ENCODE measurements at regions of chr22 and their contacts with region 1.

Region 1: DNA sequence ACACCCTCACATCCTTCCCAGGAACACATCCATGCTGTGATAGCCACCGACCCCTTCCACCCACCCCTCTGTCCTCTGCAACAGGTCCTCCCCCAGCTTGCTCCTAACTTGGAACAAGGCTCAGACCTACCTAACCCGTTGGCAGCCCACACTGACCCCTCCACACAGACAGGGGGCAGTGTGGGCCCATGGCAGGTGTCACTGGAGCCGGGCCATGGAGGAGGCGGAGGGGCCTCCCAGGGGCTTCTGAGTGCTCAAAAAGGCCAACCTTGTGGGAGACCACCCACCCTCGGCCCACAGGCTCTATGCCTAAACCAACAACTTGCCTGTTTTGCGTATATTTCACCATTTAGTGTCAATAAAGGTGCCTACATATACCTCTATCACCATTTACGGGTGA is 57.0 kb downstream of the CERK start:
- DNase-seq: no peak
- ATAC-seq: no peak
- H3K4me3 ChIP-seq: no peak overlapping the region
- H3K27ac ChIP-seq: no peak overlapping the region
- H3K4me1 ChIP-seq: peaks cover 9 to 70% (median 47%) of the 10 kb centered on the region in 9 donors
- H3K27me3 ChIP-seq: no peaks in the 10 kb centered on the region
- CTCF ChIP-seq: peak in 7 of 9 donors; percentile 17 to 45 (median 24)

Region 2: DNA sequence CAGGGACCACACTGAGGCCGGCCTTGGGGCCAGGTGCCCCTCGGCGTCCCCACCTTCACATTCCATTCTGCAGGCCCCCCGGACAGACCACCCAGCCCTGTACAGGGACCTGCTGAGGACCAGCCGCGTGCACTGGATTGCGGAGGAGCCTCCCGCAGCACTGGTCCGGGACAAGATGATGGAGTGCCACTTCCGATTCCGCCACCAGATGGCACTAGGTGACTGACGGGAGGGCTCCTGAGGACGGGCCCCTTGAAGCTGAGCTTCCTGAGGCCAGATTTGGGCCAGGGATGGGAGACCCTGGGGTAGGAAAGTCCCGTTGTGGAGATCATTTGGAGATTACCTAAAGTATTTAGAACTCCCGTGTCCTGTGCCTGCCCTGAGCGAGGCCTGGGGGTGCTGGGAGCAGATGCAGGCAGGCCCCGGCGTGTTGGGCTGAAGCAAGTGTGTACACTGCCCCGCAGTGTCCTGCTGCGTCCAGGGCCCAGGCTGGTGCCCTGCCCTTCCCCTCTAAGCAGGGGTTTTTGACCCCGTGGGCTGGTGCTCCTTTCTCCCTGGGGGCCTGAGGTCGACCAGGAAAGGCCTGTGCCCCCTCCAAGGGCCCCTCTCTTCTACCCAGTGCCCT is 325.5 kb before region 1 on chr22:
- intact Hi-C with region 1: loop called in 1 of 10 experiments (anchors 10 kb)
- DNase-seq: peak; percentile 57 to 70
- ATAC-seq: peak in 7 of 8 donors; percentile 18 to 57 (median 38)
- H3K4me3 ChIP-seq: no peak overlapping the region
- H3K27ac ChIP-seq: peak overlapping the region in 3 of 10 donors; percentile 23 to 44 (median 44)
- H3K4me1 ChIP-seq: peaks cover 3 to 41% (median 15%) of the 10 kb centered on the region in 9 donors
- H3K27me3 ChIP-seq: no peaks in the 10 kb centered on the region
- CTCF ChIP-seq: peak; percentile 38 to 82 (median 79)

Region 3: GRCh38 chr22:46542011-46542985 is 138.7 kb before region 1 on chr22:
- intact Hi-C with region 1: no loop called
- DNase-seq: peak; percentile 62 to 79
- ATAC-seq: peak; percentile 66 to 83 (median 76)
- H3K4me3 ChIP-seq: no peak overlapping the region
- H3K27ac ChIP-seq: peak overlapping the region in 1 of 10 donors; percentile 15
- H3K4me1 ChIP-seq: peaks cover 0 to 46% (median 31%) of the 10 kb centered on the region in 9 donors
- H3K27me3 ChIP-seq: peaks cover 0 to 48% (median 30%) of the 10 kb centered on the region in 7 donors
- CTCF ChIP-seq: peak; percentile 86 to 97 (median 90)

Region 4: DNA sequence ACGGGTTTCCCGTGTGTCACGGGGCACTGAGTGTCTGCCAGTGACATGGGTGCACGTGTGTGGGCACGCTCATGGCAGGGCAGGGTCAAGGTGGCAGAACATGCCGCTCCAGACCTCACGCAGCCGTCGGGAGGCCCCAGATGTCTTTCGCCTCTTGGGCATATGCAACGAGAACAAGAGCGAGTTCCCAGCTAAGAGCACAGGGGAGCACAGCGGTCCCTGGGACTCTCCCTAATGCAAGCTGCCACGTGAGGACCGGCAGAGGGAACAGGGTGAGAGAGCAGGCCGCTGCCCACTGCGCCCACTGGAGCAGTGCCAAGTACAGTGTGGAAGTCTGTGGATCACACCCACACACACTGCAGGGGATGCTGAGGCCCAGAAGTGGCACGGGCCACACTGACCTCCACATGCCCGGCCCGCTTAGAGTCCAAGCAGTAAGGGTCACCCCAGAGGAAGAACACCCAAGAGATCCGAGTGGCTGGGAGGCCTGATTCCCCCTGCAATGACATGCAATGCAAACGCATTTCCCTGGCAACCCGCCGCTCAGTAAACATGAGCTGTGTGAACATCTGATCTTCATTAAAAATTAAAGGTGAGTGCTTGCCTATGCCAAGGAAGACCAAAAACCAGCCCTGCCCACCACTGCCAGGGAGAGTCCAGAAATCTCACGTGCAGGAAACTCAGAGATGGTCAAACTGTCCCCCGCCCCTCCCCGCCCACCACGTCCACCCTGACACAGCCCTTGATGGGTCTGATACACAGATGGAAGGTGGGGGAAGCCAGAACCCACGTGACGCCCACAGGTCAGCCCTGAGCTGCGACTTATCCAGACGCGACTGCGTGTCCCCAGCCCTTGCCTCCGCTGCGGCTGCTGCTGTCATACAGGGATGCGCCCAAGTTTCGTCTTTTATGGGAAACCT is 45.3 kb after region 1 on chr22:
- intact Hi-C with region 1: loop called in 5 of 10 experiments (anchors 5 kb)
- DNase-seq: no peak
- ATAC-seq: peak in 6 of 8 donors; percentile 2 to 63 (median 32)
- H3K4me3 ChIP-seq: no peak overlapping the region
- H3K27ac ChIP-seq: peak overlapping the region in 7 of 10 donors; percentile 11 to 52 (median 32)
- H3K4me1 ChIP-seq: peaks cover 24 to 80% (median 70%) of the 10 kb centered on the region in 9 donors
- H3K27me3 ChIP-seq: no peaks in the 10 kb centered on the region
- CTCF ChIP-seq: no peak

Region 5: GRCh38 chr22:46737976-46738646 is 57.1 kb after region 1 on chr22 and contains the start of gene CERK:
- intact Hi-C with region 1: loop called in 1 of 10 experiments (anchors 5 kb)
- DNase-seq: peak; percentile 81 to 91
- ATAC-seq: peak; percentile 69 to 89 (median 74)
- H3K4me3 ChIP-seq: peak within 1 kb of the TSS; percentile 57 to 99 (median 92)
- H3K27ac ChIP-seq: peak within 1 kb of the TSS; percentile 96 to 99 (median 98)
- H3K4me1 ChIP-seq: peaks cover 28 to 83% (median 70%) of the 10 kb centered on the region in 9 donors
- H3K27me3 ChIP-seq: no peaks in the 10 kb centered on the region
- CTCF ChIP-seq: no peak
- total RNA-seq, gene CERK: 50.9 to 97.0 (median 74.2) TPM